ENCODE measurements at regions of chr19 and their contacts with region 1.

Region 1: DNA sequence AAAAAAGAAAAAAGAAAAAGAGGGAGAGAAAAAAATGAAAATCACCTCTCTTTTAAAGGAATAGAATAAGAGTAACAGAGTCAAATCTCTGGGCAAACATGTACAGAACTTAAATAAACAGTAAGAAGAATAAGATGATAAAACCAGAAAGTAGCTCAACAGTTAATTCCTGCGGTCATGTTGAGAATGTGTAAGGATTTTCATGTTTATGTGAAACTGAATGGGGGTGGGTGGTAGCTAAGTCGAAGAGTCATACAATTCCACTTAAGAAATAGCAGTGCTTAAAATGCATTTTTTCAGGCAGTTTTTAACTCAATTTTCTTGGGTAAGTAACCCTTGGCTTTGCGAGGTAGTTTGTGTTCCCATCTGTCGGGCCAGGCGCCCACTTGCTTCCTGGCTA is 60.9 kb downstream of the PEX11G start:
- DNase-seq: no peak
- H3K4me3 Mint-ChIP-seq: no peak overlapping the region
- H3K27ac Mint-ChIP-seq: peak overlapping the region; percentile 93
- H3K4me1 Mint-ChIP-seq: peaks cover 18% of the 10 kb centered on the region
- H3K27me3 Mint-ChIP-seq: no peaks in the 10 kb centered on the region

Region 2: DNA sequence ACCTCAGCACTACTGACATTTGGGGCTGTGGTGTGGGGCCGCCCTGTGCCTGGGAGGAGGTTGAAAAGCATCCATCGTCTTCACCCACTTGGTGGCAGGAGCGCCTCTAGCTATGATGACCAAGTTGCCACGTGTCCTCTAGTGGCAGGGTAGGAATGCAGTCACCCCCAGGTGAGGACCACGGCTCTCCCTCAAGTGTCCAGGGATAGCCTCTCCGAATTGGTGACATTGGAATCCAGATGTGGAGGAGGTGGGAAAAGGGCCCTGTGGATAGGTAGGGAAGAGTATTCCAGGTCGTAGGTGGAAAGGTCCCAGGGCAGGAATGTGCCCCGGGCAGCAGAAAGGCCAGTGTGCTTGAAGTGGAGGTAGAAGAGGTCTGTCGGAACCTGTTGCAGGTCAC is 41.6 kb before region 1 on chr19:
- intact Hi-C with region 1: loop called (anchors 5 kb)
- DNase-seq: no peak
- H3K4me3 Mint-ChIP-seq: no peak overlapping the region
- H3K27ac Mint-ChIP-seq: peak overlapping the region; percentile 78
- H3K4me1 Mint-ChIP-seq: peaks cover 9% of the 10 kb centered on the region
- H3K27me3 Mint-ChIP-seq: no peaks in the 10 kb centered on the region

Region 3: GRCh38 chr19:7450243-7451223 is 22.6 kb after region 1 on chr19:
- intact Hi-C with region 1: no loop called
- DNase-seq: no peak
- H3K4me3 Mint-ChIP-seq: no peak overlapping the region
- H3K27ac Mint-ChIP-seq: no peak overlapping the region
- H3K4me1 Mint-ChIP-seq: no peaks in the 10 kb centered on the region
- H3K27me3 Mint-ChIP-seq: no peaks in the 10 kb centered on the region

Region 4: GRCh38 chr19:7461841-7462750 is 34.2 kb after region 1 on chr19:
- intact Hi-C with region 1: no loop called
- DNase-seq: no peak
- H3K4me3 Mint-ChIP-seq: no peak overlapping the region
- H3K27ac Mint-ChIP-seq: no peak overlapping the region
- H3K4me1 Mint-ChIP-seq: no peaks in the 10 kb centered on the region
- H3K27me3 Mint-ChIP-seq: no peaks in the 10 kb centered on the region

Region 5: GRCh38 chr19:7492142-7492541 is 64.2 kb after region 1 on chr19:
- intact Hi-C with region 1: loop called (anchors 1 kb)
- DNase-seq: peak; percentile 55
- H3K4me3 Mint-ChIP-seq: no peak overlapping the region
- H3K27ac Mint-ChIP-seq: peak overlapping the region; percentile 85
- H3K4me1 Mint-ChIP-seq: peaks cover 26% of the 10 kb centered on the region
- H3K27me3 Mint-ChIP-seq: peaks cover 4% of the 10 kb centered on the region